ENCODE measurements at regions of chr1 and their contacts with region 1.

Region 1: DNA sequence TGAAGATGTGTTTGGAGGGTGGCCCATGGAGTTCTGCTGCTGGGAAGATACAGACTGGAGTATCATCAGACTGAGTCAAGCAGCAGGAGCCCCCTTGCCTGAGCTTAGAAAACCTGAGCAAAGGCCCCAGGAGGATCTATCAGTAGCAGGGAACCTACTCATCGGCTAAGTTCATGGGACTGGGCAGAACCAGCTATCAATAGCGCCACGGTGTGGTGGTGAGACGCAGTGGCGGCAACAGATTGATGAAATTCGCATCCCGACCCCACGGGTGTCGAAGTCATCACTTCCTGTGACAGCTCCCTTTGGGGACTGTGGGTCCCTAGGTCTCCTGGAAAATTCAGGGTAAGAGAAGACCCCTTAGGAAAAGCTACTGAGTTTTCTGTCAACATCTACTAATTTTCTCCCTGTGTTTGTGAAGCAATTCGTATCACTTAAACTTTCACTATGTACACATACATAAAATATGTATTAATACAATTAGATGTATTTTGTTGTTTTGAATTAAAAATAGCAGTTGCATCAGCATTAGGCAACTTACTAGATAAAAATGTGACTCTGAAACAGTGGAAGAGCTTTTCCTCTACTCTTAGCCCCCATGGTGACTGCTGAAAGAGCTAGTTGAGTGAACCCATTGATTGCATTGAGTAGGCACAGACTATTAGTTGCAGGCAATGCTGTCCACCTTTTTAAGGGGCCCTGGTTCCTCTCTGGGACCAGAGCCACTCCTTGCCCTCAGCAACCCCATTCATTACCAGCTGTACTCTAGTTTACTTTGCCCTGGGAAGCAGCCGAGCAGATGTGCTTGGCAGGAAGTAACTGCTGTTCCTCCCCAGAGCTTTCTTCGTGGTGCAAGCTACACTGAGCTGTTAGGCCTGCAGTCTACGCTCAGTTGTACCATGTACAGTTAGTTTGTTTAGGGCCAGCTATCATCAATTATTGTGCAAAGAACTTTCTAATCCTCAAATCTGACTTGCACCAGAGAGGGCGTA is 7.3 kb upstream of the CACNA1S start:
- DNase-seq: peak; percentile 58
- H3K4me3 Mint-ChIP-seq: no peak overlapping the region
- H3K27ac Mint-ChIP-seq: no peak overlapping the region
- H3K4me1 Mint-ChIP-seq: peaks cover 6% of the 10 kb centered on the region
- H3K27me3 Mint-ChIP-seq: peaks cover 33% of the 10 kb centered on the region

Region 2: DNA sequence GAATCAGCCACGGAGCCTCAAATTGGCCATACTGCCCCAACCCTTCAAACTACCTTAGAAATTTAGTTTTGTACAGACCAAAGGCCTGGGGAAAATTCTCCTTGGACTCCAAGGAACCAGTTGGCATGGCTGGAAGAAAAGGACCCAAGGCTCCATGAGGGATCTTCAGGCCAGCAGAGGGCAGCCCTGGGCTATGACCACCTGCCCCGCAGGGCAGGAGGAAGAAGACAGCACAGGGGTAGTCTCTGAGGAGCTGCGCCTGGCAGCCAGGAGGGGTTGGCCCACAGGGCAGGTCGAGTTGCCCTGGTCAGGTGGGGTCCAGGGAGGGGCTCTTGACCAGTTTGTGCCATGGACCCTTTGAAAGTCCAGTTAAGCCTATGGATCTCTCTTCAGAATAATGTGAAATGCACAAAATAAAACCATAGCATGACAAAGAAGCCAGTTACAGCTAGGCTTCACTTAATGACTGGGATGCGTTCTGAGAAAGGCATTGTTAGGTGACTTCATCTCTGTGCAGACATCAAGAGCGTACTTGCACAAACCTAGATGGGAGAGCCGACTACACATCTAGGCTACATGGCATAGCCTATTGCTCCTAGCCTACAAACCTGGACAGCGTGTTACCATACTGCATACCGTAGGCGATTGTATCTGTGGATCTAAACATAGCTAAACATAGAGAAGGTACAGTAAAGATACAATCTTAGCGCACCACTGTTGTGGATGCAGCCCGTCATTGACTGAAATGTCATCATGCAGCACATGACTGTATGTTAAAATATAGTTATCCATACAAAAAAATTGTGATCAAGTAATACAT is 33.4 kb before region 1 on chr1:
- CTCF ChIA-PET with region 1: interaction called, 11 read pairs
- POLR2A ChIA-PET with region 1: interaction called, 4 read pairs
- DNase-seq: peak; percentile 34
- H3K4me3 Mint-ChIP-seq: no peak overlapping the region
- H3K27ac Mint-ChIP-seq: no peak overlapping the region
- H3K4me1 Mint-ChIP-seq: no peaks in the 10 kb centered on the region
- H3K27me3 Mint-ChIP-seq: peaks cover 23% of the 10 kb centered on the region

Region 3: DNA sequence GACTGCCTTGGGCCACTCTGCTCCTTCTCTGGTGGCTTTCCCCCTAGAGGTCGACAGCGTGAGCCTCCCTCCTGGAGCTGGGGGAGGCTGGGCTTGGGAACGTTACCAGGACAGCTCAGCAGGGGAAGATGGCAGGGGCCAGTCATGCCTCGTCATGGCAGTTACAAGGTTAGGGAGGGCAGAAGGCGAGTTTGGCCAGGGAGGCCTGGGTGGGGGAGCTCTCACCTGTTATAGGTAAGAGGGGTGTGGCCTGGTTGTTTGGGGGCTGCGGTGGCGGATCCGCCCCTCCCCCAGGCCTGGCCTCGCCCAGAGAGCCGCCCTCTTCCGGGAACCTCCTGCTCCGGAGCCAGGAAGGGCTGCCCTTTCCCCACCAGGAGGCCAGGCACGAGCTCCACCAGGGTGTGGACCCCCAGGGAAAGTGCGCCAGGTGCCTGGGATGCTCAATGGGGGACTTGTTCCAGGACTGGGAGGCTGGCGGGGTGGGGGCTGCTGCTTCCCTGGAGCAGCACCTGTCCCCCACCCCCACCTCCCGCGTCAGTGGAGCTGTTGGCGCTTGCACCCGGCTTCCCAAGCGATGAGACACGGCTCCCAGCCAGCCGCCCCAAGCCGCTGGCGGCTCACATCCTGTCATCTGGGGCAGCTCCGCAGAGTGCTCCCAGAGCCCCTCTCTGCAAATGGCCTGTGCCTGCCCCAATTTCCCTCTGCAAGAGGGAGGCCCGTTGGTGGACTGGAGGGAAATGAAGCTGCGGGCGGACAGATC is 140.2 kb after region 1 on chr1:
- CTCF ChIA-PET with region 1: no interaction called
- POLR2A ChIA-PET with region 1: no interaction called
- DNase-seq: no peak
- H3K4me3 Mint-ChIP-seq: no peak overlapping the region
- H3K27ac Mint-ChIP-seq: no peak overlapping the region
- H3K4me1 Mint-ChIP-seq: peaks cover 2% of the 10 kb centered on the region
- H3K27me3 Mint-ChIP-seq: peaks cover 10% of the 10 kb centered on the region